ENCODE measurements at regions of chr2 and their contacts with region 1.

Region 1: DNA sequence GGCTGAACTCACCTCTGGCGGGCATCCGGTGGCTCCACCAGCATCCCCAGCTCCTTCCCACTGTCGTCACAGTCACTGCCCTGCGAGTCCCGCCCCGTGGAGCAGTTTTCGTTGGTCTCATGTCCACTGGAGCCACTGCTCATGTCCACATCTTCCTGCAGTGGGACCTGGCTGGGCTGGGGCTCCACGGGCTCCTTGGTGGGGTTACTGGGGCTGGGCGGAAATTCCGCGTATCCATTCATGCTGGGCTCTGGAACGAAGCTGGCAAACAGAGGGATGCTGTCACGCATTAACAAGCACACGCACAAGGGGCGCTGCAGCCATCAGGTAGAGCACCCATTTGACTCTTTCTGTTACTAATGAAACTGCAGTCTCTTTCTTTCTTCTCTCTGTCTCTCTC is 10.7 kb downstream of the PER2 start:
- DNase-seq: no peak
- H3K4me3 ChIP-seq: no peak overlapping the region
- H3K27ac ChIP-seq: no peak overlapping the region
- H3K4me1 ChIP-seq: no peaks in the 10 kb centered on the region
- H3K27me3 ChIP-seq: no peaks in the 10 kb centered on the region
- CTCF ChIP-seq: no peak; the same call in 1 of the 2 replicates
- EP300 ChIP-seq: no peak
- RAD21 ChIP-seq: no peak

Region 2: DNA sequence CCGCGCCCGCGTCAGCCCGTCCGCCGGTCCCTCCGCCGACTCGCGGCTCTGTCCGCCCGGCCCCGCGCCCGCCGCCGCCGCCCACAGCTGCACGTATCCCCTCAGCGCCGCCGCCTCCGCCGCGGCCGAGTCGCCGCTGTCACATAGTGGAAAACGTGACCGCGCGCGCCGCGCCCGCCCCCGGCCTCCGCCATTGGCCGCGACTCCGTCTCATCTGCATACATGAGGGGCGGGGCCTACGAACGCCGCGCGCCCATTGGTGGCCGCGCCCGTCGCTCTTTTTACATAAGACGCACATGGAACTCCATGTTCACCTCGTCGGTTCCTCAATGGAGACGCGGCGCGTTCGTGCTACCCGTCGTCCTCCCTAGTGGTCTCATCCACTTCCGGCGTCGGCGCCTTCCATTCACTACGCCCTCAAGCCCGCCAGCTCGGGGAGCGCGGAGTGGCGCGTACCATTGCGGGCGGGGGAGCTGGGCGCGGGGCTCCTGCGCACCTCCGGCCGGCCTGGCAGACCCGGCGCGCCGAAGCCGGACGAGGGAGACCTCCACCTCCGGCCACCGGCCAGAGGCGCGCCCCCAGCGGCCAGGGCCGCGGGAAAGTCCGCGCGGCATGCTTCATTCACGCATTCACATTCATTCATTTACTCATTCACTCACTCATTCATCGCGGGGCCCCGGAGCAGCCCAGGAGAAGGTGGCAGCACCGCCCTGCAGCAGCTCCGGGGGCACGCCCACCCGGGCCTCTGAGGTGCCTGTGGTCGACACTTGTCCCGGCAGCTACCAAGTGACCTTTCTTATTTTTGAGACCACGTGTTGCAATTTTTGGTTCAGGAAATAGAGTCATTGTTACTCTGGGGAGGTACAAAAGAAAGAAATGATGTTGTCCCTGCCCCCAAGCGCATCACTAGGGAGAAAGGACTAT is 11.2 kb after region 1 on chr2:
- CTCF ChIA-PET with region 1: interaction called, 18 read pairs
- POLR2A ChIA-PET with region 1: no interaction called
- DNase-seq: peak; percentile 98
- H3K4me3 ChIP-seq: peak overlapping the region; percentile 74 to 75
- H3K27ac ChIP-seq: peak overlapping the region in 1 of 2 experiments; percentile 67; a peak in 1 of 4 replicates
- H3K4me1 ChIP-seq: peaks cover 8 to 15% of the 10 kb centered on the region in 2 experiments; a peak in 3 of 4 replicates
- H3K27me3 ChIP-seq: no peaks in the 10 kb centered on the region; the same call in 1 of the 2 replicates
- CTCF ChIP-seq: peak; percentile 52
- EP300 ChIP-seq: 0 out of 4 replicates have a peak, but pooled peaks of 1 of the 2 experiments have one; percentile 15
- RAD21 ChIP-seq: no peak